ENCODE measurements at regions of chrX and their contacts with region 1.

Region 1: GRCh38 chrX:134813697-134814096 is 155.4 kb upstream of the PLAC1 start:
- DNase-seq: no peak
- ATAC-seq: no peak
- H3K4me3 ChIP-seq: no peak overlapping the region
- H3K27ac ChIP-seq: no peak overlapping the region
- H3K4me1 ChIP-seq: no peaks in the 10 kb centered on the region
- H3K27me3 ChIP-seq: no peaks in the 10 kb centered on the region
- CTCF ChIP-seq: no peak
- POLR2A ChIP-seq: no peak

Region 2: GRCh38 chrX:134849390-134849789 is 35.7 kb after region 1 on chrX:
- in situ Hi-C with region 1: no loop called
- intact Hi-C with region 1: no loop called
- DNase-seq: no peak
- ATAC-seq: no peak
- H3K4me3 ChIP-seq: no peak overlapping the region
- H3K27ac ChIP-seq: no peak overlapping the region
- H3K4me1 ChIP-seq: no peaks in the 10 kb centered on the region
- H3K27me3 ChIP-seq: no peaks in the 10 kb centered on the region
- CTCF ChIP-seq: no peak
- POLR2A ChIP-seq: no peak

Region 3: DNA sequence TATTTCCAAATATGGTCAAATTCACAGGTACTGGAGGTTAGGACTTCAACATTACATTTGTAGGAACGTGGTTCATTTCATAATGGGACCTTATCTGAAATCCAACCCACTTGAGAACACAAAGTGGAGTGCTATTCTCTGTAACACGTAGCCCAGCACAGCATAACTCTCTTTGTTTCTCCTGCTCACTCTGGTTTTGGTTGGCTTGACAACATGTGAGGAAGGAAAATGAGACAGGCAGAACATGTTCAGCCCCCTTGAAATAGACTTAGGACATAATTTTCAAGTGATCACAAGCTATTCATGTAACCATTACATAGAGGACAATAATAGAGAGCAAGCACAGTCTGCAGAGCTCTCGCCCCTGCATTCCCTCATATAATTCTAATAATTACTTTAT is 62.0 kb after region 1 on chrX:
- in situ Hi-C with region 1: loop called in 1 of 4 experiments (anchors 10 kb)
- intact Hi-C with region 1: no loop called
- DNase-seq: no peak
- ATAC-seq: no peak
- H3K4me3 ChIP-seq: no peak overlapping the region
- H3K27ac ChIP-seq: no peak overlapping the region
- H3K4me1 ChIP-seq: no peaks in the 10 kb centered on the region
- H3K27me3 ChIP-seq: no peaks in the 10 kb centered on the region
- CTCF ChIP-seq: no peak
- POLR2A ChIP-seq: no peak